ENCODE measurements at regions of chr2 and their contacts with region 1.

Region 1: GRCh38 chr2:112108178-112108832 is 29.9 kb upstream of the FBLN7 start:
- DNase-seq: no peak
- H3K4me3 ChIP-seq: no peak overlapping the region
- H3K27ac ChIP-seq: no peak overlapping the region
- H3K4me1 ChIP-seq: no peaks in the 10 kb centered on the region
- CTCF ChIP-seq: no peak

Region 2: GRCh38 chr2:112093216-112093615 is 15.1 kb before region 1 on chr2:
- CTCF ChIA-PET with region 1: no interaction called
- POLR2A ChIA-PET with region 1: interaction called, 12 read pairs
- intact Hi-C with region 1: no loop called
- DNase-seq: no peak
- H3K4me3 ChIP-seq: no peak overlapping the region
- H3K27ac ChIP-seq: no peak overlapping the region
- H3K4me1 ChIP-seq: no peaks in the 10 kb centered on the region
- CTCF ChIP-seq: no peak

Region 3: GRCh38 chr2:113041871-113042508 is 933.7 kb after region 1 on chr2:
- CTCF ChIA-PET with region 1: no interaction called
- POLR2A ChIA-PET with region 1: no interaction called
- intact Hi-C with region 1: no loop called
- DNase-seq: peak; percentile 1
- H3K4me3 ChIP-seq: no peak overlapping the region
- H3K27ac ChIP-seq: no peak overlapping the region
- H3K4me1 ChIP-seq: no peaks in the 10 kb centered on the region
- CTCF ChIP-seq: 0 out of 2 replicates have a peak, but pooled peaks have one; percentile 20

Measured in OCI-LY7 (cell line).